WTC11 (cell line): ENCODE measurements at regions of chr20 and their contacts with region 1.

Region 1: GRCh38 chr20:63056236-63056948 is 49.6 kb upstream of the BHLHE23 start:
- DNase-seq: peak; percentile 80
- ATAC-seq: peak; percentile 79
- H3K4me3 Mint-ChIP-seq: no peak overlapping the region
- H3K27ac Mint-ChIP-seq: no peak overlapping the region
- H3K4me1 Mint-ChIP-seq: no peaks in the 10 kb centered on the region
- H3K27me3 Mint-ChIP-seq: no peaks in the 10 kb centered on the region; the same call in 1 of the 2 replicates
- CTCF ChIP-seq: peak; percentile 93

Region 2: GRCh38 chr20:63014710-63015109 is 41.7 kb before region 1 on chr20:
- CTCF ChIA-PET with region 1: interaction called, 14 read pairs
- POLR2A ChIA-PET with region 1: no interaction called
- DNase-seq: peak; percentile 74
- ATAC-seq: peak; percentile 97
- H3K4me3 Mint-ChIP-seq: peak overlapping the region; percentile 56
- H3K27ac Mint-ChIP-seq: no peak overlapping the region
- H3K4me1 Mint-ChIP-seq: peaks cover 24% of the 10 kb centered on the region
- H3K27me3 Mint-ChIP-seq: peaks cover 33% of the 10 kb centered on the region
- CTCF ChIP-seq: no peak

Region 3: GRCh38 chr20:63032861-63033634 is 23.3 kb before region 1 on chr20:
- CTCF ChIA-PET with region 1: interaction called, 15 read pairs
- POLR2A ChIA-PET with region 1: no interaction called
- DNase-seq: peak; percentile 52
- ATAC-seq: peak; percentile 13
- H3K4me3 Mint-ChIP-seq: peak overlapping the region; percentile 49
- H3K27ac Mint-ChIP-seq: peak overlapping the region; percentile 91
- H3K4me1 Mint-ChIP-seq: peaks cover 49% of the 10 kb centered on the region
- H3K27me3 Mint-ChIP-seq: peaks cover 6% of the 10 kb centered on the region
- CTCF ChIP-seq: no peak

Region 4: DNA sequence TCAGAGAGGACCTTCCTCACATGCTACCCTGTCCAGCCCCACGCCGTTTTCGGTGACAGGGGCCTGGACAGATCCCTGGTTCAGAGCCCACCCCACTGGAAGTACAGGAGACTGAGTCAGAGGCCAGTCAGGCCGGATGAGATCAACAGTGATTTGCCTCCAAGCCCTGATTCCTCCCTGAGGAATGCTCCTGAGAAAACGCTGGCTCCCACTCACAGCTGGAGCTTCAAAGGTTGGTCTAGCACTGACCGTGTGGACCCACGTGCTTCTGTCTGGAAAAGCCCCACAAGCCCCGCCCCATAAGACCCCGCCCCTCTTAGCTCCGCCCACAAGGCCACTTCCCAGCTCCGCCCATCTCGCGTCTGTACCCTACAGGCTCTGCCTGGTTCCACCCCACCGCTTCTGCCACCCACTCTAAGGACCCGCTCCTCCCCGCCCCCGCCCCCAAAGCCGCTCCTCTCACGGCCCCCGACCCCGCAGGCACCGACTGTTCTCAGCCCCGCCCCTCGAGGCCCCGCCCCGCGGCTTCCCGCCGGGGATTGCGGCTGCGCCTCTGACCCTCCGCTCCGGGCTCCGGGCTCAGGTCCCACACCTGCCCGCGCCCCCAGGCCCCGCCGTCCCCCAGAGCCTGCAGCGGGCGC is 15.3 kb after region 1 on chr20:
- CTCF ChIA-PET with region 1: interaction called, 17 read pairs
- POLR2A ChIA-PET with region 1: no interaction called
- DNase-seq: peak; percentile 80
- ATAC-seq: peak; percentile 90
- H3K4me3 Mint-ChIP-seq: peak overlapping the region; percentile 51
- H3K27ac Mint-ChIP-seq: no peak overlapping the region
- H3K4me1 Mint-ChIP-seq: peaks cover 4% of the 10 kb centered on the region
- H3K27me3 Mint-ChIP-seq: peaks cover 35% of the 10 kb centered on the region
- CTCF ChIP-seq: no peak

Region 5: GRCh38 chr20:63172720-63173119 is 116.3 kb after region 1 on chr20:
- CTCF ChIA-PET with region 1: interaction called, 27 read pairs
- POLR2A ChIA-PET with region 1: no interaction called
- DNase-seq: peak; percentile 74
- ATAC-seq: peak; percentile 58
- H3K4me3 Mint-ChIP-seq: no peak overlapping the region
- H3K27ac Mint-ChIP-seq: no peak overlapping the region
- H3K4me1 Mint-ChIP-seq: peaks cover 6% of the 10 kb centered on the region
- H3K27me3 Mint-ChIP-seq: peaks cover 56% of the 10 kb centered on the region
- CTCF ChIP-seq: peak; percentile 25; the same call in 1 of the 2 replicates

Region 6: DNA sequence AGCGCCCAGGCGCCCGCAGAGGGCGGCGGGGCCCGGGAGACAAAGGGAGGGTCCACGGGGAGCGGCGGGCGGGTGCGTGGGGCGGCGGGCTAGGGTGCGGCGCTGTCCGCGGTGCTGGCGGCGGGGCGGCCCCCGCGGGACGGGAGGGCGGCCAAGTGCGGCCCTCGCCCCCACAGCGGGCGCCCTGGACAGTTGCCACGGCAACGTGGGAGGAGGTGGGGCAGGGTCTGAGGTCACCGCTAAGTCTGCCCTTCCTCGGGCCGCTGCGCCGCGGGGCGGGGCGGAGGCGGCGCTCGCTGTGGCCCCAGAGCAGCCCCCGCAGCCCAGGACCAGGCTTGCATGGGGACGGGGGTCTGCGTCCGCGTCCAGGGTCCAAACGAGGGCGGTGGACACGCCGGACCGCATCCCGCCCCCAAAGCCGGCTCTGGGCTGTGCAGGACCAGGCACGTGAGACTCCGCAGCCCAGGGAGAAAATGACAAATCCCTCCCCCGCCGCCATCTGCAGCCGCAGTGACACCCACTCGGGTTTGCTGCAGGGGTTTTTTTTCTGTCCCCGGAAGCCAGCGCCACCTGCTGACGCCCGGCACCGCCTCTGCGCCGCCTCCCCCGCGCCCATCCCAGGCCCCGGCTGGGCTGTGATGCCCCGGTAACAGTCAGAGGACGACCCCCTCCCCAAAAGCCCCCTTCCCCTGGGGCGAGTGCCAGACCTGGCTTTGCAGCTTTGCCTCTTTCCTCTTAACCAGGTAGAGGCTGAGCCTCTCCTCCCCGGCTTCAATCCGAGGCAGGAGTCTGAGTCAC is 122.7 kb after region 1 on chr20:
- CTCF ChIA-PET with region 1: interaction called, 25 read pairs
- POLR2A ChIA-PET with region 1: no interaction called
- DNase-seq: peak; percentile 57
- ATAC-seq: peak; percentile 1; the same call in 1 of the 2 replicates
- H3K4me3 Mint-ChIP-seq: peak overlapping the region; percentile 65
- H3K27ac Mint-ChIP-seq: no peak overlapping the region
- H3K4me1 Mint-ChIP-seq: peaks cover 10% of the 10 kb centered on the region
- H3K27me3 Mint-ChIP-seq: peaks cover 47% of the 10 kb centered on the region
- CTCF ChIP-seq: no peak